HCT116 (cell line): ENCODE measurements at regions of chr9 and their contacts with region 1.

Region 1: GRCh38 chr9:101601904-101602765 is 7.4 kb upstream of the PPP3R2 start:
- DNase-seq: peak; percentile 31
- ATAC-seq: peak; percentile 90
- H3K4me3 ChIP-seq: no peak overlapping the region
- H3K27ac ChIP-seq: no peak overlapping the region
- H3K4me1 ChIP-seq: no peaks in the 10 kb centered on the region
- H3K27me3 ChIP-seq: peaks cover 39% of the 10 kb centered on the region
- CTCF ChIP-seq: peak; percentile 48 to 69 (median 62)
- POLR2A ChIP-seq: no peak
- RAD21 ChIP-seq: peak; percentile 69

Region 2: DNA sequence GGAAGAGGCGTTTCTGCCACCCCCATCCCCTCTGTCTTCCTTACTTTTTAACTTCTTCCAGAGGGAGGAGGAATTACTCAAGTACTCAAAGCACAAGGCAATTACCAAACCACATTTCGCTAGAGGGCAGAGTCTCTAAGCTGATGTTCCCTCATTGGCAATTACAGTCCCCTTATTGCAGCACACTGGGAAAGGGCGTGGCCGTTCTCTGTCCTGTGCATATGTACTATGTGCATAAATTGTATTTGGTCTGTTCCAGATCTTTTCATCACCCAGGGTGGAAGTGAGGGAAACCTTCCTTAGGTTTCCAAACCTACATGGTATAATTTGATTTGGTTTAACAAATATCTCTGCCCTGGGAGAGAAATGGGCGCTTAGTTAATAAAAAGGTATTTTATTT is 136.7 kb before region 1 on chr9:
- CTCF ChIA-PET with region 1: no interaction called
- POLR2A ChIA-PET with region 1: no interaction called
- RAD21 ChIA-PET with region 1: no interaction called
- intact Hi-C with region 1: no loop called
- DNase-seq: peak; percentile 83
- ATAC-seq: peak; percentile 99
- H3K4me3 ChIP-seq: no peak overlapping the region
- H3K27ac ChIP-seq: no peak overlapping the region
- H3K4me1 ChIP-seq: peaks cover 16 to 27% of the 10 kb centered on the region in 2 experiments; a peak in 3 of 4 replicates
- H3K27me3 ChIP-seq: no peaks in the 10 kb centered on the region
- CTCF ChIP-seq: peak; percentile 63 to 83 (median 64); a peak in 5 of 6 replicates
- POLR2A ChIP-seq: no peak
- RAD21 ChIP-seq: peak; percentile 67

Region 3: DNA sequence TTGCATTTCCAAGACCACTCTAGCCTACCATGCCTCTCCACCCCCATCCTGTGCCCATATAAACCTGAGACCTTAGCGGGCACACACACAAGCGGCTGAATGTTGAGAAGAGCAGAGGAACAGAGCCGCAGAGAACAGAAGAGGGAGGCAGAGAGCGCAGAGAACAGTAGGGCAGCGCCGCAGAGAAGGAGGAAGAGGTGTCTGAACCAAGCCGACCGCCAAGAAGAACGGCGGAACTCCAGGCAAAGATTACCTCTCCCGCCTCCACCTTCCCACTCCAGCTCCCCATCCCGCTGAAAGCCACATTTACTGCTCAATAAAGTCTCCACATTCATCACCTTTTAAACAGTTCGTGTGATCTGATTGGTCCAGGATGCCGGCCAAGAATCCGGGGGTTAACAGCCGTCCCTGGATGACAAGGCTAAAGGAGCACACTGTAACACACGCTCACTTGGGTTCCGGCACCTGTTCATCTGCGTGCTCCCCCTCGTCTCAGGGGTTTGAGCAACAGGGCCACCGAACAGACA is 103.1 kb after region 1 on chr9:
- CTCF ChIA-PET with region 1: no interaction called
- POLR2A ChIA-PET with region 1: no interaction called
- RAD21 ChIA-PET with region 1: no interaction called
- intact Hi-C with region 1: loop called (anchors 5 kb)
- DNase-seq: no peak
- ATAC-seq: peak; percentile 87
- H3K4me3 ChIP-seq: no peak overlapping the region
- H3K27ac ChIP-seq: no peak overlapping the region
- H3K4me1 ChIP-seq: peaks cover 0 to 4% of the 10 kb centered on the region in 2 experiments; a peak in 1 of 4 replicates
- H3K27me3 ChIP-seq: peaks cover 26% of the 10 kb centered on the region
- CTCF ChIP-seq: 0 out of 6 replicates have a peak, but pooled peaks have one; percentile 4 to 9 (median 4)
- POLR2A ChIP-seq: no peak
- RAD21 ChIP-seq: no peak

Region 4: DNA sequence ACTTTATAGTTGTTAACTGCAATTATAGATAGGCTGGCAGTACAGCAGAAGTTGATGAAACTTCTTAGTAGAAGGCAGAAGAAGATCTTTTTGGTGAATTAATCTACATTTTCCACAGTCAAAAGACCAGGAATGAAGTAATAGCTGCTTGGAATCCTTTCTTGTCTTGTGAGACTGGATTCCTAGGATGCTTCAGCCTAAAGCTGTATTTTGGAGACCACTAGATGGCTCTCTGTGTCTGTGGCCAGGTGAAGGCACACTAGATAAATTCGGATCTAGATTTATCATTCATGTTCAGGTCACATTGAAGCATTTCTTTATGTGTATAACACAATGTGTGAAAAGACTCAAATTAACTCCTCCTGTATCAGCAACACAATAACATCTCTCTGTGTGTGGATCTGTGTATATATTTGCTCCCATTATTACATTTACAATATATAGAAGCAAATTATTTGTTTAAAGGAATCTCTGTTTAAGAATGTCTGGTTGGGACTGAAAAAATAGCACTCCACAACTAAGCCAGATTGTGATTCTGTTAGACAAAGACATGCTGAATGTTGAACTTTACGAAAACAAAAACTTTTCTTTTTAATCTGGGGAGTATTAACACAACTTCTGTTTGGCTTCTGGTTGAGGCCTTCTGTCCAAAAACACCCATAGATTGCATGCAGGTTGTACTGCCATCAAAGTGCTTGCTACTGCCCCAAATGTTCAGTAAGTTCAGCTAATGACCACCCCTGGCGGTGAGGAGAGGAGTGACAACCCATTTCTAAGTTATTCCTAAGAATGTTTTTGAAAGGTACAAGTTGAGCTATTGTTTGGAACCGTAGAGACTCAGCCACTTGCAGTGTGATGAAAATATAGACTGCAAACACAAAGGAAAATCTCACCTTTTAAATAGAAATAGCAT is 125.7 kb after region 1 on chr9:
- CTCF ChIA-PET with region 1: interaction called, 4 read pairs
- POLR2A ChIA-PET with region 1: no interaction called
- RAD21 ChIA-PET with region 1: no interaction called
- intact Hi-C with region 1: loop called (anchors 5 kb)
- DNase-seq: no peak
- ATAC-seq: peak; percentile 81
- H3K4me3 ChIP-seq: no peak overlapping the region
- H3K27ac ChIP-seq: no peak overlapping the region
- H3K4me1 ChIP-seq: no peaks in the 10 kb centered on the region
- H3K27me3 ChIP-seq: no peaks in the 10 kb centered on the region
- CTCF ChIP-seq: peak; percentile 24 to 63 (median 61); a peak in 4 of 6 replicates
- POLR2A ChIP-seq: no peak
- RAD21 ChIP-seq: peak; percentile 45